Activated CD8-positive, alpha-beta memory T cell treated with anti-CD3 and anti-CD28 coated beads, Interleukin-2, amount 10 ng/mL, durations not matched to agents 7 days and 5 days (primary cell): ENCODE measurements at regions of chr7 and their contacts with region 1.

Region 1: GRCh38 chr7:140456551-140457051 is 22.7 kb downstream of the MKRN1 start:
- DNase-seq: no peak
- ATAC-seq: no peak
- H3K4me3 Mint-ChIP-seq: no peak overlapping the region
- H3K27ac Mint-ChIP-seq: no peak overlapping the region
- H3K4me1 Mint-ChIP-seq: peaks cover 32% of the 10 kb centered on the region
- H3K27me3 Mint-ChIP-seq: no peaks in the 10 kb centered on the region

Region 2: GRCh38 chr7:140192620-140193019 is 264.0 kb before region 1 on chr7:
- CTCF ChIA-PET with region 1: no interaction called
- DNase-seq: no peak
- ATAC-seq: no peak
- H3K4me3 Mint-ChIP-seq: no peak overlapping the region
- H3K27ac Mint-ChIP-seq: no peak overlapping the region
- H3K4me1 Mint-ChIP-seq: peaks cover 18% of the 10 kb centered on the region
- H3K27me3 Mint-ChIP-seq: peaks cover 13% of the 10 kb centered on the region

Region 3: DNA sequence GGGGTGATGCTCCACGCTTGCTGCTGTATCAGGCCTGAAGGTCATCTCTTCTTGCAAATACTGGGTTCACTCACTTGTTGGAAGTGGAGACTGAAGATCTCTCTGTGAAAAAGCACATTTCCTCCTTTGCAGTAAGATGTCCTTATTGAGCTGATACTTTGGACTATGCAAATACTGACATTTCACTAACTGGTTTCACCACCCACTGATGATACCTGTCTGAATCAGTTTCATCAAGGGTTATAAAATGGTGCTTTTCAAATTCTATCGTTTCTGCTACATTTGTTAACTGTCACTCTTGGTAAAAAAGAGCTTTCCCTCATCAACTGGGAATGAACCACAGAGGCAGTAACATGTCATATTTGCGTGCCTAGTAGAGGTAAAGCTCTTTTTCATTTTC is 17.2 kb before region 1 on chr7:
- CTCF ChIA-PET with region 1: interaction called, 11 read pairs
- DNase-seq: no peak
- ATAC-seq: no peak
- H3K4me3 Mint-ChIP-seq: no peak overlapping the region
- H3K27ac Mint-ChIP-seq: no peak overlapping the region
- H3K4me1 Mint-ChIP-seq: peaks cover 10% of the 10 kb centered on the region
- H3K27me3 Mint-ChIP-seq: peaks cover 2% of the 10 kb centered on the region

Region 4: GRCh38 chr7:140640060-140640637 is 183.5 kb after region 1 on chr7:
- CTCF ChIA-PET with region 1: no interaction called
- DNase-seq: no peak
- ATAC-seq: peak; percentile 47
- H3K4me3 Mint-ChIP-seq: peak overlapping the region; percentile 61
- H3K27ac Mint-ChIP-seq: no peak overlapping the region
- H3K4me1 Mint-ChIP-seq: peaks cover 11% of the 10 kb centered on the region
- H3K27me3 Mint-ChIP-seq: peaks cover 67% of the 10 kb centered on the region